MCF 10A (cell line): ENCODE measurements at regions of chr5 and their contacts with region 1.

Region 1: GRCh38 chr5:72955768-72956323 is at the start of gene FCHO2:
- DNase-seq: peak; percentile 98
- H3K4me3 Mint-ChIP-seq: peak within 1 kb of the TSS; percentile 86
- H3K27ac Mint-ChIP-seq: peak within 1 kb of the TSS; percentile 99
- H3K4me1 Mint-ChIP-seq: peaks cover 44% of the 10 kb centered on the region
- H3K27me3 Mint-ChIP-seq: no peaks in the 10 kb centered on the region
- CTCF ChIP-seq: peak; percentile 48
- total RNA-seq, gene FCHO2: 16.9 and 26.3 TPM in 2 replicates

Region 2: DNA sequence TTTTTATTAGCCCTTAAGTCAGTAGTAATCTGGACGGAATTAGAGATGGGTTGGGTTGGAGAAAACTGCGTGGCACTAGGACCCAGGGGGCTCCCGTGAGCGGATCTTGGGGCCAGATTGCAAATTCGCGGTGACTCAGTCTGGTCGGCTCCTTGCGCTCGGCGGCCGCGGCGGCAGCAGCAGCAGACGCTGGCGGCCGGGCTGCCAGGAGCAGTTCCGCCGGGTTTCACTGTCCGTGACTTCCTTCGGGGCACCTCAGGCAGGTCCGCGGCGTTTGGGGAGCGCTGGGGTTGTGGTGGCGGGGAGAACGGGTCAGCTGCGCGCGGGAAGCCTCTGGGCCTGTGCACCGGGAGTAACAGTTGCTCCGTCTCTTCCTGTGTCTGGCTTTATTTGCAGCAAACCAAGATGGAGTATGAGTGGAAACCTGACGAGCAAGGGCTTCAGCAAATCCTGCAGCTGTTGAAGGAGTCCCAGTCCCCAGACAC is 107.8 kb before region 1 on chr5:
- CTCF ChIA-PET with region 1: no interaction called
- POLR2A ChIA-PET with region 1: interaction called, 12 read pairs
- intact Hi-C with region 1: no loop called
- DNase-seq: peak; percentile 93
- H3K4me3 Mint-ChIP-seq: peak overlapping the region; percentile 98
- H3K27ac Mint-ChIP-seq: peak overlapping the region; percentile 91
- H3K4me1 Mint-ChIP-seq: peaks cover 43% of the 10 kb centered on the region
- H3K27me3 Mint-ChIP-seq: no peaks in the 10 kb centered on the region
- CTCF ChIP-seq: no peak

Region 3: DNA sequence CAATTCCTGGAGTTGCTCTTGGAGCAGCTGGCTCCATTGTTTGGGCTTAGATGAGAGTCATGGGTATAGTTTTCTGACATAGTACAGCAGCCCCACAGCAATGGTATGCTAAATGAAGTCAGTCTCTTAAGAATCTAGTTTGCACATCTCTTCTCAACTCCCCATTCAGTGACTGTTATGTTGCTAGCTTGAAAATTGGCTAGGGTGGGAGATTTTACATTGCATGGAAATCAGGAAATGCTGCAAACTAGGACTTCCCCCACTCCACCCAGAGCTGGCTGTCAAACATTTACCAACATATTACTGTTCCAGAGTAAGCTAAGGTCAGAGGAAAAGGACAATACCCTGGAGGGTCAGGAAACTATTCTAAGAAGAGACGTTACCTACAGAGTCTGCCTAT is 17.6 kb before region 1 on chr5:
- CTCF ChIA-PET with region 1: no interaction called
- POLR2A ChIA-PET with region 1: interaction called, 14 read pairs
- intact Hi-C with region 1: no loop called
- DNase-seq: no peak
- H3K4me3 Mint-ChIP-seq: no peak overlapping the region
- H3K27ac Mint-ChIP-seq: no peak overlapping the region
- H3K4me1 Mint-ChIP-seq: peaks cover 1% of the 10 kb centered on the region
- H3K27me3 Mint-ChIP-seq: no peaks in the 10 kb centered on the region
- CTCF ChIP-seq: no peak

Region 4: DNA sequence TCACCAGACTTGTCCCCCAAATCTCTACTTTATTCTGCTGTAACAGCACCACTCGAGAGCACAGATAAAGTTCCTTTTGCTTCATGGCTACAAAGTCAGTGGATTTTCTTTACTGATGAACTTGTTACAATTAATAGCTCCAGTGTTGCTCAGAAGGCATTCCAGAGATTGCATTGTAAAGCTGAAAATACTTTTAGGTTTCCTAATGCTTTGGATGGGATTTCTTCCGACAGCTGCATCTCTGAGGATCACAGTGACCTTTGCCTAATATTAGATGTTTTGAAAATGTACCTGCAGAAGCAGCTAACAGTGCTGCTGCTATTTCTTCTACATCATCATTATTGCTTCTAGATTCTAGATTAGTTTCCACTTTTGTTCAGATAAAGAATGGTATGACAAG is 105.7 kb after region 1 on chr5:
- CTCF ChIA-PET with region 1: interaction called, 5 read pairs
- POLR2A ChIA-PET with region 1: no interaction called
- intact Hi-C with region 1: loop called (anchors 5 kb)
- DNase-seq: no peak
- H3K4me3 Mint-ChIP-seq: no peak overlapping the region
- H3K27ac Mint-ChIP-seq: no peak overlapping the region
- H3K4me1 Mint-ChIP-seq: peaks cover 6% of the 10 kb centered on the region
- H3K27me3 Mint-ChIP-seq: no peaks in the 10 kb centered on the region
- CTCF ChIP-seq: no peak

Region 5: GRCh38 chr5:73454351-73455036 is 498.6 kb after region 1 on chr5:
- CTCF ChIA-PET with region 1: interaction called, 3 read pairs
- POLR2A ChIA-PET with region 1: no interaction called
- intact Hi-C with region 1: loop called (anchors 10 kb)
- DNase-seq: peak; percentile 85
- H3K4me3 Mint-ChIP-seq: no peak overlapping the region
- H3K27ac Mint-ChIP-seq: no peak overlapping the region
- H3K4me1 Mint-ChIP-seq: peaks cover 5% of the 10 kb centered on the region
- H3K27me3 Mint-ChIP-seq: no peaks in the 10 kb centered on the region
- CTCF ChIP-seq: peak; percentile 70

Region 6: GRCh38 chr5:73591102-73591695 is 635.4 kb after region 1 on chr5:
- CTCF ChIA-PET with region 1: no interaction called
- POLR2A ChIA-PET with region 1: no interaction called
- intact Hi-C with region 1: no loop called
- DNase-seq: peak; percentile 84
- H3K4me3 Mint-ChIP-seq: no peak overlapping the region
- H3K27ac Mint-ChIP-seq: no peak overlapping the region
- H3K4me1 Mint-ChIP-seq: peaks cover 14% of the 10 kb centered on the region
- H3K27me3 Mint-ChIP-seq: no peaks in the 10 kb centered on the region
- CTCF ChIP-seq: peak; percentile 64